AG04450 (cell line): ENCODE measurements at regions of chr11 and their contacts with region 1.

Region 1: GRCh38 chr11:5600374-5600851 is 4.0 kb downstream of the TRIM6 start:
- DNase-seq: peak; percentile 80
- H3K4me3 ChIP-seq: no peak overlapping the region
- H3K27ac ChIP-seq: peak overlapping the region; percentile 39
- H3K27me3 ChIP-seq: no peaks in the 10 kb centered on the region
- CTCF ChIP-seq: peak; percentile 97

Region 2: DNA sequence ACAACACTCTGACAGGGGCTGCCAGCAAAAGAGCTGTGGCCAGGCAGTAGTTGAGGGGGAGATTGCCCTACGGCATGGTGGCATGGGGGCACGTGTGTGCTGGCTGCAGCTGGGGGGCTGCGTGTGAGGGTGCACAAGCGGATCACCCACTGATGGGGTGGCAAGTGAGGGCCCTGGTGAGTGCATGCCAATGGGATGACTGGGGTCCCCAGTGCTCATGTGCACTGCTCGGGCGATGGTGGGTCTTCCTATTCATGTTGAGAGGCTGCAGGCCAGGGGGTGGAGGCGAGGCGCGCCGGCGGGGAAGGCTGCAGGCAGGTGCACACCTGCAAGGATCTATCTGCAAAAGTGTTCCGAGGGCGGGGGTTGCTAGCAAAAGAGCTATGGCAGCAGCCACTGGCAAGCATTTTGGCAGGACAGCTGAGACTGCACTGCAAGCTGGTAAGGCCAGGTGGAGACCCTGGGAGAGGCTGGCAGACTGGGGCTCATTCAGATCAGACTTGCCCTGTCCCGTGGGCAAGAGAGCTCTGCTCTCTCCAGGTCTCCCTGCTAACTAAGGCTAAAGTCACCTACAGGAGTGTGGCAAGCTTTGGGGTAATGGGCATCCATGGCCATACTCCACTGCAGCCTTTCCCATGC is 139.3 kb before region 1 on chr11:
- CTCF ChIA-PET with region 1: no interaction called
- POLR2A ChIA-PET with region 1: no interaction called
- DNase-seq: no peak
- H3K4me3 ChIP-seq: no peak overlapping the region
- H3K27ac ChIP-seq: no peak overlapping the region
- H3K27me3 ChIP-seq: no peaks in the 10 kb centered on the region
- CTCF ChIP-seq: no peak

Region 3: DNA sequence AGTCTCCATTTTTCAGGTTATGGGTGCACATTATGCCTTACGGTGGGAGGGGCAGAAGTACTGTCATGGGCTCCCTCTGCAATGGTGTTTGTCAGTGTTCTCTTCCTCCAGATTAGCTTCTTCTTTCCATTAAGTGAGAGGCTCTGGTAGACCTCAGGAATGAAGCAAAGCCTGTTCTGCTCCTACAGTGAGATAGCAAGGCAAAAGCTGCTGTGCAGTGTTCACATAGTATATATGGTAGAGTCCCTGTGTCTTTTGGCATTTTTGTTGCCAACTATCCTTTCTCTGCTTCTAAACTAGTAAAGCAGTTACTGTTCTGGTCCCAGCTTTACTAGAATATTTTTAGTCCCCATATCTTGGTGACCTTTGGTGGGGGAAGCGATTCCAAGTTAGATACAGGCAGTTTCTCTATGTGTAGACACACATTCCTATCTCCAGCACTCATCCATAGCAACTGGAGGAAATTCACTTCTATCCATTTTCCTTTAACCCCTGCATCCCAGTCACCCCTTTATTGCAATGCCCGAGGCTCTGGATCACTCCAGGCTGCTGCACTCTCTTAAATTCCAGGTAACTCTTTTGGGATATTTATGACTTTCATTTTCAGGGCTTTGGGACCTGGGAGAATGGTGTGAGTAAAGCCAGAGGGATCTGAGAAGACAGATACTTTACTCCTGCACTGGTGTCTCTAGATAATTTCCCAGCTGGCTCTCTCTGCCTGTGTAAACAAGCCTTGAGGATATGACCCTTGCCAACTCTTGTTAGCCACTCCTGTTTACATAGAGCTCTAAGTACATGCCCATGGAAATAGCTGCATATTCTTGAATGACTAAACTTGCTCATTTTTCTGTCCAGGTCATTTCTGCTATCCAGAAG is 20.5 kb after region 1 on chr11:
- CTCF ChIA-PET with region 1: interaction called, 10 read pairs
- POLR2A ChIA-PET with region 1: interaction called, 3 read pairs
- DNase-seq: peak; percentile 78
- H3K4me3 ChIP-seq: no peak overlapping the region
- H3K27ac ChIP-seq: peak overlapping the region; percentile 68
- H3K27me3 ChIP-seq: no peaks in the 10 kb centered on the region
- CTCF ChIP-seq: no peak

Region 4: DNA sequence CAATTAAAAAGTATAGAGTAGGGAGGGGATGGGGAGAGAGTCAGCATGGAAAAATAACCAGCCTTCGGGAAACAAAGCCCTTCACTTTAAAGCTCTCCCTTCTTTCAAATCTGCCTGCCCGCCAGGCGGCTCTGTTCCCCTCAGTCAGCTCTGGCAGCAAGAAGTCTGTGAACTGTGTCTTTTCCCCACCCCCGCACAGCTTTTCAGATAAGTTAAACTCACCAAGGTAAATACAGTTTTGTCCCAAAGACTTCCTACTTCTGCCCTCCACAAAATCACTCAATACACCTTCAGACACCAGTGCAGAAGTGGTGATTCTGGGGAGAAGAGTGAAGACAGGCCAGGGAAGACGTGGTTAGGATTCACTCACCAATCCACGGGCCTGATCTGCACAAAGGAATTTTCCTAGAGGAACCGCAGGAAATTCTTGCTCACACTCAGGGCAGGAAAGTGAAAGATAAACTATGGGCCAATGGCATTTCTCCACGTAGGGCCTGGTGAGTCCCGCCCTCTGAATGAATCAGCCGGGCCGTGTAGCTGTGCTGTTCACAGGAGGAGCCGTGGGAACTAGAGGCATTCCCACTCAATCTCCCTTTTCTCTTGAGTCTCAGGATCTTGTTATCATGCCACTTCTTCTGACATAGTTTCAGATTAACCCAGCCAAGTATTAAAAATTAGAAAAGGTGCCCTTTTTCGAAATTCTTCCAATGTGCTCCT is 84.4 kb after region 1 on chr11 and contains the start of gene TRIM5:
- CTCF ChIA-PET with region 1: interaction called, 14 read pairs
- POLR2A ChIA-PET with region 1: no interaction called
- DNase-seq: peak; percentile 95
- H3K4me3 ChIP-seq: peak within 1 kb of the TSS; percentile 62
- H3K27ac ChIP-seq: peak within 1 kb of the TSS; percentile 100
- H3K27me3 ChIP-seq: no peaks in the 10 kb centered on the region
- CTCF ChIP-seq: peak; percentile 72
- polyA plus RNA-seq, gene TRIM5: 46.3 and 53.3 TPM in 2 replicates

Region 5: GRCh38 chr11:5712507-5712906 is 112.1 kb after region 1 on chr11:
- CTCF ChIA-PET with region 1: interaction called, 10 read pairs
- POLR2A ChIA-PET with region 1: no interaction called
- DNase-seq: no peak
- H3K4me3 ChIP-seq: no peak overlapping the region
- H3K27ac ChIP-seq: no peak overlapping the region
- H3K27me3 ChIP-seq: no peaks in the 10 kb centered on the region
- CTCF ChIP-seq: peak; percentile 52